ENCODE measurements at regions of chr15 and their contacts with region 1.

Region 1: DNA sequence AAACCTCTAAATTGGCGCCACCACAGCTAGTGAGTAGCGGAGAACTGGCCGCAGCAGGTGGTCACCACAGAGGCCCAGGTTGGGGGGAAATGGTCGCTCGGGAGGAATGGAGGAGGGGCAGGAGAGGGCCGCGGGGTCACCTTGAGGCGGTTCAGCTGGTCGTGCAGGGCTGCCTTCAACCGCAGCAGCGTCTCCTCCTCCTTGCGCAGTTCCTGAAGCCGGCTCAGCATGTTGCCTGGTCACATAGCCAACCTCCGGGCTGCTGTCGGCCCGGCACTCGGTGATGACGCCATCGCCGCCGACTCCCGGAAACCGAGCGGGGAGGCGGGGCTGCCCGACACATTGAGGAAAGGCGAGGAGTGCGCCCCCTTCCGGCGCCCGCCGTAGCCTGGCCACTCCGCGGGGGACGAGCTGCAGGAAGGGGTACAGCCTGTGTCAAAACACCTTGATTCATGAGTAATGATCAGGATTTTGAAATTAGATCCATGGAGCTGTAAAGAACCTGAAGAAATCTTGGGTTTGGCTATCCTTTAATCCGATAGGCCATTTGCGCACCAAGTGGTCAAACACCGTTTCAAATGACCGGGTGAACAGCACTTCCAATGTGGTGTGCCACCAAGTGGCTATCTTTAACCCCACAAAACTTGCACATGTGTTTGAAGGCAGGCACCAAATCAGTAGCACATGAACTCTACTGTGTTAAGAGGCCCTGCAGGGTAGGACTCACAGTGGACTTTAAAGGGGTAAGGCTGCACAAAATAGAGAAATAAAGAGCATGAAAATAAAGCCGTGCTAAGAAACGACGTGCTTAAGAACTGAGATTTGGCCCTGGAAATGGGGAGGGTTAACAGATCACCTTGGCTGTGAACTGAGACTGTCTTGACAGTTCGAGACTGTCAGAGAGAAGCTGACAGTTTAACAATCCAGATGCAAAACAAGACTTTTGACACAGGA is at the start of gene SNAPC5:
- H3K4me3 ChIP-seq: peak within 1 kb of the TSS; percentile 75
- H3K27ac ChIP-seq: peak within 1 kb of the TSS; percentile 65
- H3K4me1 ChIP-seq: peaks cover 2% of the 10 kb centered on the region; the same call in 1 of the 2 replicates
- CTCF ChIP-seq: peak; percentile 100

Region 2: DNA sequence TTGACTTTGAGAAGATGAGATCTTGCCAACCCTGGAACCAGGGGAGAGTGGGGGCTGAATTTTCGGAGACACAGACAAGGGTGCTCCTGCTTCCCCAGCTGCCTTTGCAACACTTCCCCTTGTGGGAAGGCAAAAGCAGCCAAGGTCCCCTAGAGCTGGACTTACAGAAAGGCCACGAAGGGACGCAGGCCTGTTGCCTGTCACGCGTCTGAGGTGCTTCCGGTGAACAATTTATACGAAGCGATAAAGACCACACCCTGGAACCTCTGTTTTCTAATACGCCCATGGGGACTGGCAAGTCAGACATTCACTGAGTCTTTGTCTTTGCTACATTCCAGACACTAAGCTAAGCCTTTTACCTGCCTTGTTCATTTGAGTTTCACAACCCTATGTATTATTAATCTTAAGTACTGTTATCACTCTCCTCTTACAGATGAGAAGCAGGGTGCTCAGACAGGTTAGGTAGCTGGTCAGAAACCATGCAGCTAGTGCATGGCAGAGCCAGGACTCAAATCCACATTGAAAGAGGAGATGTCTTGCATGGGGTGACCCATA is 257.5 kb before region 1 on chr15:
- CTCF ChIA-PET with region 1: no interaction called
- POLR2A ChIA-PET with region 1: no interaction called
- H3K4me3 ChIP-seq: no peak overlapping the region
- H3K27ac ChIP-seq: no peak overlapping the region
- H3K4me1 ChIP-seq: no peaks in the 10 kb centered on the region
- CTCF ChIP-seq: no peak

Region 3: GRCh38 chr15:66323312-66323928 is 174.4 kb before region 1 on chr15:
- CTCF ChIA-PET with region 1: interaction called, 11 read pairs
- POLR2A ChIA-PET with region 1: no interaction called
- H3K4me3 ChIP-seq: no peak overlapping the region
- H3K27ac ChIP-seq: no peak overlapping the region
- H3K4me1 ChIP-seq: no peaks in the 10 kb centered on the region
- CTCF ChIP-seq: peak; percentile 17; the same call in 1 of the 2 replicates

Region 4: GRCh38 chr15:66356345-66357236 is 141.2 kb before region 1 on chr15 and contains the start of gene TIPIN:
- CTCF ChIA-PET with region 1: interaction called, 12 read pairs
- POLR2A ChIA-PET with region 1: interaction called, 3 read pairs
- H3K4me3 ChIP-seq: peak within 1 kb of the TSS; percentile 88
- H3K27ac ChIP-seq: peak within 1 kb of the TSS; percentile 87
- H3K4me1 ChIP-seq: peaks cover 6% of the 10 kb centered on the region; the same call in 1 of the 2 replicates
- CTCF ChIP-seq: no peak

Region 5: DNA sequence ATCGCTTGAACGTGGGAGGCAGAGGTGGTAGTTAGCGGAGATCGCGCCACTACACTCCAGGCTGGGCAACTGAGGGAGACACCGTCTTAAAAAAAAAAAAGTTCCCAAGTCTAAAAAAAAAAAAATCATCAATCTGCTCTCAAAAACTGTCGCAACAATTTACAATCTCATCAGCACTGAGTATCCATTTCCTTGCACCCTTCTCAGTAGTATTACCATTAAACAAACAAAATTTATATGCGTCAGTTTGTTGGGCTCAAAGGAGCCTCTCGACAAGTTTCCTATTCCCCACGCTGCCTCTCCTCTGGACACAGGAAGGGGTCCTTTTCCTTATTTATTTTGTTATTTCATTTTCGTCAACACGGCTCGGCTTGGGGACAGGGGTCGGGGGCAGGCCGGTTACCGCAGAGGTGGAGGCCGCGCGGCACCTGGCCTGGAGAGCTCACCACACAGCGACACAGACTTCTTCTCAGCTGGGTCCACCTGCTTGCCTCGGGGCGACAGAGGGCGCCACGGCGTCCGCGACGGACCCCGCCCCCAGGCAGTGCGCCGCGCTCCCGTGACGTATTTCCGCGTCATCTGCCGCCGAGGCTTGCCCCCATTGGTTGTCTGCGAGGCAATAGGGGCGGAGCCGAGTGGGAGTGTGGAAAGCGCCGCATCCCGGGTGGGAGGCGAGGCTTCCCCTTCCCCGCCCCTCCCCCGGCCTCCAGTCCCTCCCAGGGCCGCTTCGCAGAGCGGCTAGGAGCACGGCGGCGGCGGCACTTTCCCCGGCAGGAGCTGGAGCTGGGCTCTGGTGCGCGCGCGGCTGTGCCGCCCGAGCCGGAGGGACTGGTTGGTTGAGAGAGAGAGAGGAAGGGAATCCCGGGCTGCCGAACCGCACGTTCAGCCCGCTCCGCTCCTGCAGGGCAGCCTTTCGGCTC is 111.3 kb before region 1 on chr15 and contains the start of gene MAP2K1:
- CTCF ChIA-PET with region 1: interaction called, 58 read pairs
- POLR2A ChIA-PET with region 1: interaction called, 26 read pairs
- H3K4me3 ChIP-seq: peak within 1 kb of the TSS; percentile 88
- H3K27ac ChIP-seq: peak within 1 kb of the TSS; percentile 83
- H3K4me1 ChIP-seq: peaks cover 5% of the 10 kb centered on the region; the same call in 1 of the 2 replicates
- CTCF ChIP-seq: peak; percentile 100

Region 6: GRCh38 chr15:66459818-66460615 is 37.8 kb before region 1 on chr15:
- CTCF ChIA-PET with region 1: interaction called, 17 read pairs
- POLR2A ChIA-PET with region 1: interaction called, 8 read pairs
- H3K4me3 ChIP-seq: no peak overlapping the region
- H3K27ac ChIP-seq: no peak overlapping the region
- H3K4me1 ChIP-seq: peaks cover 6% of the 10 kb centered on the region; the same call in 1 of the 2 replicates
- CTCF ChIP-seq: no peak

Region 7: DNA sequence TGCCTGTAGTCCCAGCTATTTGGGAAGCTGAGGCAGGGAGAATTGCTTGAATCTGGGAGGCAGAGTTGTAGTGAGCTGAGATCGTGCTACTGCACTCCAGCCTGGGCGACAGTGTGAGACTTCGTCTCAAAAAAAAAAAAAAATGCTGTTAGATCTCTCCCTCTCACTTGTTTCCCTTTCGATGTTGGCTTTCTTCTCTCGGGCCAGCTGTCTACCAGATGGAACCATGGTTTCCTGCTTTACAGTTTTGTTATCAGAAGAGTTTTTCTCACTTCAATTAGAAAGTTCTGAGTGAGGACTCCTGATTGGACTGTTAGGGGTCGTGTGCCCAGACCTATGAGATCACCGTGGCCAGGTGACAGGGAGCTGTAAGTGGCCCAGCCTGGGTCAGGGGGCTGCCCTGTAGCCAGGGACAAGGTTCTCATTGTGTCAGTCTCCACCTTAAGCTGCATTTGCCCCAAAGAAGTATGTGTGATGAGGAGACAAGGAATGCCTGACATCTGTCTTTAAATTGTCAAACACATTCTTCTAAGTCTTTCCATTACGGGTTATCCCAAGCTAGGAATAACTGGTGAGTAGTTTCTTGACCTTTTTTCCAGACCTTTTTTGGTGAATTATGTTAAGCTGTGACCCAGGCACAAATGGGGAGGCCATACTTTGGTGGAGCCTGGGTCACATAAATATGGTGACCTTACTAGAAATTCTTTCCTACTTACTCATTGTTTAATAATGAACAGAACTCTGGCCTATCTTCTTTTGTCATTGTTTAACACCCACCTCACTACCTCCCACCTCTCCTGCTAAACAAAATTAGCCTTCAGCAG is 25.4 kb before region 1 on chr15:
- CTCF ChIA-PET with region 1: interaction called, 14 read pairs
- POLR2A ChIA-PET with region 1: interaction called, 10 read pairs
- H3K4me3 ChIP-seq: no peak overlapping the region
- H3K27ac ChIP-seq: no peak overlapping the region
- H3K4me1 ChIP-seq: no peaks in the 10 kb centered on the region
- CTCF ChIP-seq: no peak

Region 8: DNA sequence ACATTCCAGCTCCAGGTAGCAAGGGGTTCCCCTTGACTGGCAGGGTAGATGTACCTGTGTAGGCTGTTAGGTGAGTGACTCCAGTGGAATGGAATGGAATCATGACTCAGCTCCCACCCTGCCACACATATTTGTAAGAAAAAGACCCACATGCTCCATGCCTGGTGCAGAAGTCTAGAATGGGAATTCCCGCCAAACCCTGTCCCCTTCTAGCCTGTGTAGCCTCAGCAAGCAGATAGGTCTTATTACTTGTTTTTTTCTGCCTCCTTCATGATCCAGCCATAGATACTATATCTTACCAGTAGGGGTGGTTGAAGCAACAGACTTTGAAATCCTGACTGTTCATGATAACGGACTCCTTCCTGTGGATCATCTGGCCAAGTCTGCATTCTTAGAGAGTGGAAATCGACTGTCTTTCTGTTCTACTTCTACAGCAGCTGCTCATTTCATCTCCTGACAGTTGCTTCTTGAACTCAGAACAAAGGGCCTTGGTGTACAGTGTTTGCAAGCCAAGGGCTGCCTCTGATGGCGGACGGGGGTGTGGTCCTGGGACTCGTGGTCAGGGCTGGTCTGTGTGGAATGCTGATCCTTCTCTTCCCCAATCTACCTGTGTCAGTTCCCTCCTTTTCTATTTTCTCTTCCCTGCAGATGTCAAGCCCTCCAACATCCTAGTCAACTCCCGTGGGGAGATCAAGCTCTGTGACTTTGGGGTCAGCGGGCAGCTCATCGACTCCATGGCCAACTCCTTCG is 16.5 kb before region 1 on chr15:
- CTCF ChIA-PET with region 1: interaction called, 12 read pairs
- POLR2A ChIA-PET with region 1: interaction called, 3 read pairs
- H3K4me3 ChIP-seq: no peak overlapping the region
- H3K27ac ChIP-seq: no peak overlapping the region
- H3K4me1 ChIP-seq: no peaks in the 10 kb centered on the region
- CTCF ChIP-seq: no peak

Region 9: GRCh38 chr15:66685638-66686150 is 187.9 kb after region 1 on chr15:
- CTCF ChIA-PET with region 1: no interaction called
- POLR2A ChIA-PET with region 1: no interaction called
- H3K4me3 ChIP-seq: no peak overlapping the region
- H3K27ac ChIP-seq: no peak overlapping the region
- H3K4me1 ChIP-seq: no peaks in the 10 kb centered on the region
- CTCF ChIP-seq: no peak